ENCODE measurements at regions of chr3 and their contacts with region 1.

Region 1: GRCh38 chr3:149765762-149766334 is 13.6 kb upstream of the COMMD2 start:
- DNase-seq: peak; percentile 35
- H3K4me3 ChIP-seq: no peak overlapping the region
- H3K27ac ChIP-seq: no peak overlapping the region
- H3K4me1 ChIP-seq: no peaks in the 10 kb centered on the region
- H3K27me3 ChIP-seq: peaks cover 50% of the 10 kb centered on the region
- CTCF ChIP-seq: peak; percentile 66

Region 2: DNA sequence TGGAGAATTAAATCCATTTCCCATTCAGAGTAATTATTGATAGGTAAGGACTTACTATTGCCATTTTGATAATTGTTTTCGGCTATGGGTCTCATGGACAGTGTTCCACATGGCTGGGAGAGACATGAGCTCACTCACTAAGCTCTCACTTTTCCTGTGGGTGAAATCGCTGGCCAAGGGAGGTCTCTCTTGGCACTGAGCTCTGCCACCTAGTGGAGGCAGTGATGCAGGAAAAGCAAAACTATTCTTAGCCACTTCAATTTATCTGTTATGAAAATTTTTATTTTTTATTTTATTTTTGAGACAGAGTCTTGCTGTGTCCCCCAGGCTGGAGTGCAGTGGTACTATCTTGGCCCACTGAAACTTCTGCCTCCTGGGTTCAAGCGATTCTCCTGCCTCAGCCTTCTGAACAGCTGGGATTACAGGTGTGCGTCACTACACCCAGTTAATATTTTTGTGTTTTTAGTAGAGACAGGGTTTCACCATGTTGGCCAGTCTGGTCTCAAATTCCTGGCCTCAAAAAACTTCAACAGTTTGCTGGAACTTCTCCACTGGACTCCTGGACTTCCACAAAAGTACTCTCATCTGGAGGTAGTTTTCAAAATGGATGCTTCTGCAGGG is 42.5 kb after region 1 on chr3:
- CTCF ChIA-PET with region 1: interaction called, 12 read pairs
- POLR2A ChIA-PET with region 1: no interaction called
- intact Hi-C with region 1: loop called (anchors 5 kb)
- DNase-seq: peak; percentile 80
- H3K4me3 ChIP-seq: no peak overlapping the region
- H3K27ac ChIP-seq: no peak overlapping the region
- H3K4me1 ChIP-seq: peaks cover 9% of the 10 kb centered on the region
- H3K27me3 ChIP-seq: no peaks in the 10 kb centered on the region
- CTCF ChIP-seq: peak; percentile 85